ENCODE measurements at regions of chr22 and their contacts with region 1.

Region 1: DNA sequence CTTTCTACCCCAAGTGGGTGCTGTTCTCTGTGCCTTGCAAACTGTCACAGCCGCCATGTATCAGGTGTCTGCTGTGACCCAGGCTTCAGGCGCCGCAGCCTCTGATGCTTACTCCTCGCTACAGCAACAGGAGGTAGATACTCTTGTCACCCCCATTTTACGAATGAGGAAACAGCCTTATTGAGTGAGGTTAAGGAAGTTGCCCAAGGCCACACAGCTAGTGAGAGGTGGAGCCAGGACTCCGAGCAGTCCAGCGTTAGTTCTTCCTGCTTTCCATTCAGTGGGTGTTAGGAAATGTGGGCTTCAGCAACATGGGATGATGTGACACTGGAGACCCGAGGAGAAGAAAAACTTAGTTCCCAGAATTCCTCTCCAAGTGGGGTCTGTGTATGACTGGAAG is 14.3 kb downstream of the RNF215 start:
- DNase-seq: no peak
- H3K4me3 Mint-ChIP-seq: no peak overlapping the region
- H3K27ac Mint-ChIP-seq: no peak overlapping the region
- H3K4me1 Mint-ChIP-seq: no peaks in the 10 kb centered on the region
- H3K27me3 Mint-ChIP-seq: no peaks in the 10 kb centered on the region
- CTCF ChIP-seq: no peak

Region 2: DNA sequence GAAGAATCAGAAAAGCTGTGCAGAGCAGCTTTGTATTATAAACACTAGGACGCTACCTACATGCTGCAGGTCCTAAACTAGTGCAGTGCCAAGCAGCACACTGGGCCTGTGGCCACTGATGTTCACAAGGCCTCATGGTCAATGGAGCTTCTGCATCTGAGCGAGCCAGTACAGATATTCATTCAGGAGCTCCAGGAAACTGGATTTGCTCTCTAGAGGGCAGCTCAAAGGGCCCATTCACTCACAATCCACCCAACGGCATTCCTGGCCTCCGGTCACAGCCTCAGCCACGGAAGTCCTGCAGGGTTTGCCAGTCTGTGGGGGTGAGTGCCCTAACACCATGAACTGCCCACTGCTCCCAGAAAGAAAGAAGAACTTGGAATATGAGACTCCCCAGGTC is 40.4 kb before region 1 on chr22:
- CTCF ChIA-PET with region 1: no interaction called
- intact Hi-C with region 1: no loop called
- DNase-seq: no peak
- H3K4me3 Mint-ChIP-seq: no peak overlapping the region
- H3K27ac Mint-ChIP-seq: no peak overlapping the region
- H3K4me1 Mint-ChIP-seq: peaks cover 12% of the 10 kb centered on the region
- H3K27me3 Mint-ChIP-seq: no peaks in the 10 kb centered on the region
- CTCF ChIP-seq: no peak

Region 3: DNA sequence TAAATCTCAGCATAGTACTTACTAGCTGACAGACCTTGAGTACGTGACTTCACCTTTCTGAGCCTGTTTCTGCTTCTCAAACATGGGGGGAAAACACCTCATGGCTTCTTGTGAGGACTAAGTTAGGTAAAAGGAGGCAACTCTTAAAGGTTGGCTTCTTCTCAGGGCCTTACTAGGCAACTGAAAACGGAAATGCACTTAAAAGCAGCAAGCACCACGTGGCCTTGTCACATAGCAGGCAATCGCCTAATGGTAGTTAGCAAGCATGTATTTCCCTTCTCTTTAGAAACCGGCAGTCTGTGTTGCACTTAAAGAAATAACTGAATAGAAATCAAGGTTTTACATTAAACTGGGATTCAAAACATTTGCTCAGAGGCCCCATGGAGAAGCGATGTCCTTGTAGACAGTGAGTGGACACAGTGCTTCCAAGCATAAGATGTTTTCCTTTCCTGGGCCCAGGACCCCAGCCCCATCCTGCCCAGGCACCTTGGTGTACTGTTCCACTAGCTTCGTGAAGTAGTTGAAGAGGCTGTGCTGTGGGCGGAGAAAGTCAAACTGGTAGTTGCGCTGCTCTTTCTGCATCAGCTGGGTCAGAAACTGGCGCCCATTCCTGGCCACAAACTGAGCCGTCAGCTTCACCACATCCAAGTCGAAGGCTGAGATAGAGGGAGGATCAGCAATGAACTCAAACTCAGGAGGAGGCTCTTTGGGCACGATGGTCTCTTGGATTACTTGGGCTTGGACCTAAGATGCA is 28.3 kb before region 1 on chr22:
- CTCF ChIA-PET with region 1: no interaction called
- intact Hi-C with region 1: loop called (anchors 1 kb)
- DNase-seq: no peak
- H3K4me3 Mint-ChIP-seq: no peak overlapping the region
- H3K27ac Mint-ChIP-seq: no peak overlapping the region
- H3K4me1 Mint-ChIP-seq: no peaks in the 10 kb centered on the region
- H3K27me3 Mint-ChIP-seq: no peaks in the 10 kb centered on the region
- CTCF ChIP-seq: no peak

Measured in Calu3 (cell line).